ENCODE measurements at regions of chr3 and their contacts with region 1.

Region 1: DNA sequence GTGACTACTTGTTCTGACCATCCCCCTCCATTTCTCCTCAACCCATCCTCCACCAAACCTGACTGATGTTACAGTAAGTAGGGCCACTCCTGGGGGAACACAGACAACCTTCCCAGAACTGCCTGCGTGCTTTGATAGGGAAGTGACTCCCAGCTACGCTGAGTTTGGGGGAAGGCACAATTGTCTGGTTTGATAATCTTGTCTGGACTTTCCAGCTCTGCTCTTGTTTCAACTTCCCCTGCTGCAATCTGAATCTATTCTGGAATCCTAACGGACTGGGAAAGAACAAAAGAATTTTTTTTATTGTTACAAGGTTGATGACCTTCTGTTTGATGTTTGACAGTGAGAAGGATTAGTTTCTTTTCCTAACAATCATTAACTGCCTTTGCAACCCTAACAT is 895.6 kb downstream of the ROBO1 start:
- DNase-seq: no peak
- H3K4me3 Mint-ChIP-seq: no peak overlapping the region
- H3K27ac Mint-ChIP-seq: no peak overlapping the region
- H3K4me1 Mint-ChIP-seq: peaks cover 18% of the 10 kb centered on the region
- H3K27me3 Mint-ChIP-seq: no peaks in the 10 kb centered on the region
- CTCF ChIP-seq: no peak

Region 2: DNA sequence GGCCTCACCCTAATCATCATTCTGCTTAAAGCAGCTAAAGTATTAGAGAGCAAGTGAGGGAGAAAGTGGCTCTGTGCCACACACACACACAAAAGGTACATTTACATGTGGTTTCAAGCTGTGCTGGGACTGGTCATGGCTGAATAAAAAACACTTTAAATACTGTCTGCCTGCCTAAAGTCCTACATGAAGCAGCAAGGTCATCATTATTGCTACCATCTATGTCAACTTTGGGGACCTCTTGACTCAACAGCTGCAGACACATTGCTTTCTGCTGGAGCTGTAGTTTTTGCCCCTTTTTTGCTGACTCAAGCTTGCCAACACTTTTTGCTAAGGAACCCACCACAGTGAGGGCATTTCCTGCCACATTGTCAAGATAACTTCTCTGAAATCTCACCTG is 594.4 kb before region 1 on chr3:
- CTCF ChIA-PET with region 1: no interaction called
- POLR2A ChIA-PET with region 1: no interaction called
- intact Hi-C with region 1: no loop called
- DNase-seq: no peak
- H3K4me3 Mint-ChIP-seq: no peak overlapping the region
- H3K27ac Mint-ChIP-seq: no peak overlapping the region
- H3K4me1 Mint-ChIP-seq: no peaks in the 10 kb centered on the region
- H3K27me3 Mint-ChIP-seq: no peaks in the 10 kb centered on the region
- CTCF ChIP-seq: no peak

Region 3: DNA sequence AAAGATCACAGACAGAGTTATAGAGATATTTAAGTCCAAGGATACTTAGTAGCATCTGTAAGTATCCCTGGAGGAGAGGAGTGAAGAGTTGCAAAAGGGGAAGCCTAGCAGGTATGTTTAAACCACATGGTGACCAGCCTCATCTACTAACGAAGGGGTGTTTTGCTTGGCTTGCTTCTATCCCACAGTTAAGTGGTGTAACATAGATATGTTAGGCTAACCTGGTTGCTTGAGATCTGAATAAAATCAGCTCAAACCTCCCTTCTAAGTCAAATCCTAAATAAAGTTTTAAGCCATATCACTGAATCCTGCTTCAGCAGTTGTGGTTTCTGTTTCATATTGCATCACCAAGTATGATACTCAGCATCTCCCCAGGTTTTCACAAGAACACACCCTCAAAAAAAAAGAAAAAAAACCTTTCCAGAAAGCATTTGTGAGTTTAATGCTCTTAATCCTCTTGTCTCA is 15.4 kb after region 1 on chr3:
- CTCF ChIA-PET with region 1: interaction called, 3 read pairs
- POLR2A ChIA-PET with region 1: interaction called, 12 read pairs
- intact Hi-C with region 1: no loop called
- DNase-seq: peak; percentile 38
- H3K4me3 Mint-ChIP-seq: no peak overlapping the region
- H3K27ac Mint-ChIP-seq: peak overlapping the region; percentile 21
- H3K4me1 Mint-ChIP-seq: peaks cover 10% of the 10 kb centered on the region
- H3K27me3 Mint-ChIP-seq: no peaks in the 10 kb centered on the region
- CTCF ChIP-seq: no peak